H1 (cell line): ENCODE measurements at regions of chr4 and their contacts with region 1.

Region 1: GRCh38 chr4:173990126-173990868 is 293.2 kb downstream of the FBXO8 start:
- DNase-seq: peak in 1 of 2 experiments; percentile 17
- H3K4me3 ChIP-seq: no peak overlapping the region
- H3K27ac ChIP-seq: no peak overlapping the region
- H3K4me1 ChIP-seq: no peaks in the 10 kb centered on the region
- H3K27me3 ChIP-seq: no peaks in the 10 kb centered on the region
- CTCF ChIP-seq: peak in 2 of 3 experiments; percentile 52 to 57; a peak in 3 of 4 replicates
- EP300 ChIP-seq: no peak
- POLR2A ChIP-seq: no peak
- RAD21 ChIP-seq: peak; percentile 64 to 71

Region 2: DNA sequence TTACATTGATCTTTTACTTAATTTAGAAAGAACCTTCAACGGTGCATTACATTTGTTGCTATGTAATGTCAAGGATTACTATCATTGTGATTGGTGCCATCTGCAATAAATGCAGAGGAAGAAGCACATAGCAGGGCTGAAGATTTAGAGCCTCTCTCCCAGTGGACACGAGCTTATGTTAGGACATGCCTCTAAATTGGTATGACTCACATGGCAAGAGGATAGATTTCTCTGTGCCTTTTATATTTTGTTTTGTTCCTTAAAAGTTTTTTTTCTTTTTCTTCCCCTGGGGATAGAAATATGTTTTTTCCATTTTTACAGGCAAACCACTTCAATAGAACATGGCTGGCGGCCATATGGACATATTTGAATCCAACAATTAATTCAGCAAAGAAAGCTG is 255.2 kb before region 1 on chr4:
- CTCF ChIA-PET with region 1: no interaction called
- POLR2A ChIA-PET with region 1: no interaction called
- DNase-seq: no peak
- H3K4me3 ChIP-seq: no peak overlapping the region
- H3K27ac ChIP-seq: no peak overlapping the region
- H3K4me1 ChIP-seq: no peaks in the 10 kb centered on the region
- H3K27me3 ChIP-seq: no peaks in the 10 kb centered on the region
- CTCF ChIP-seq: no peak
- EP300 ChIP-seq: no peak
- POLR2A ChIP-seq: no peak
- RAD21 ChIP-seq: no peak

Region 3: DNA sequence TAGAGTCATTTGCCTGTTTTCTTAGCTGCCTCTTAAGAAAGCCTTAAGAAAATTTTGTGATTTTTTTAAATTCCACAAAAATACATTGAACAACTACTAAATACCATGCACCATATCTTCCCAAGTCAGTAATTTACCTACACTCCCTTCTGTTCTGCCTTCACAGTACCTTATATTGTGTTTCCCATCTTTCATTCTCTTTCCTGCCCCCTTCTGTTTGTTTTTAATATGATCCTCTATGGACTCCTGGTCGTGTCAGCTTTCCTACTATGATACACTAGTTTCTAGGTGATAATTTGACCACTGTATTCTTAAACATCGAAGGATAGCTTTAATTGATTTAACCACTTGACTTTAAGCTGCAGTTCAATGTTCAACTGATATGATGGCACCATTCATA is 162.6 kb before region 1 on chr4:
- CTCF ChIA-PET with region 1: interaction called, 11 read pairs
- POLR2A ChIA-PET with region 1: no interaction called
- DNase-seq: no peak
- H3K4me3 ChIP-seq: no peak overlapping the region
- H3K27ac ChIP-seq: no peak overlapping the region
- H3K4me1 ChIP-seq: no peaks in the 10 kb centered on the region
- H3K27me3 ChIP-seq: no peaks in the 10 kb centered on the region
- CTCF ChIP-seq: peak in 1 of 3 experiments; percentile 16; a peak in 2 of 4 replicates
- EP300 ChIP-seq: no peak
- POLR2A ChIP-seq: no peak
- RAD21 ChIP-seq: peak; percentile 24 to 36; a peak in 3 of 4 replicates

Region 4: GRCh38 chr4:173835903-173836302 is 154.4 kb before region 1 on chr4:
- CTCF ChIA-PET with region 1: interaction called, 10 read pairs
- POLR2A ChIA-PET with region 1: no interaction called
- DNase-seq: no peak
- H3K4me3 ChIP-seq: no peak overlapping the region
- H3K27ac ChIP-seq: no peak overlapping the region
- H3K4me1 ChIP-seq: no peaks in the 10 kb centered on the region
- H3K27me3 ChIP-seq: no peaks in the 10 kb centered on the region
- CTCF ChIP-seq: no peak
- EP300 ChIP-seq: no peak
- POLR2A ChIP-seq: no peak
- RAD21 ChIP-seq: no peak